H1 (cell line): ENCODE measurements at regions of chr1 and their contacts with region 1.

Region 1: GRCh38 chr1:206912445-206913095 is 9.2 kb downstream of the FCMR start:
- DNase-seq: peak in 1 of 2 experiments; percentile 67
- H3K4me3 ChIP-seq: no peak overlapping the region
- H3K27ac ChIP-seq: no peak overlapping the region
- H3K4me1 ChIP-seq: peaks cover 0 to 7% (median under 1%) of the 10 kb centered on the region in 4 experiments; a peak in 2 of 7 replicates
- H3K27me3 ChIP-seq: peaks cover 8 to 30% (median 27%) of the 10 kb centered on the region in 4 experiments
- CTCF ChIP-seq: peak; percentile 69 to 90 (median 87)
- EP300 ChIP-seq: no peak
- POLR2A ChIP-seq: no peak
- RAD21 ChIP-seq: peak; percentile 80 to 87

Region 2: DNA sequence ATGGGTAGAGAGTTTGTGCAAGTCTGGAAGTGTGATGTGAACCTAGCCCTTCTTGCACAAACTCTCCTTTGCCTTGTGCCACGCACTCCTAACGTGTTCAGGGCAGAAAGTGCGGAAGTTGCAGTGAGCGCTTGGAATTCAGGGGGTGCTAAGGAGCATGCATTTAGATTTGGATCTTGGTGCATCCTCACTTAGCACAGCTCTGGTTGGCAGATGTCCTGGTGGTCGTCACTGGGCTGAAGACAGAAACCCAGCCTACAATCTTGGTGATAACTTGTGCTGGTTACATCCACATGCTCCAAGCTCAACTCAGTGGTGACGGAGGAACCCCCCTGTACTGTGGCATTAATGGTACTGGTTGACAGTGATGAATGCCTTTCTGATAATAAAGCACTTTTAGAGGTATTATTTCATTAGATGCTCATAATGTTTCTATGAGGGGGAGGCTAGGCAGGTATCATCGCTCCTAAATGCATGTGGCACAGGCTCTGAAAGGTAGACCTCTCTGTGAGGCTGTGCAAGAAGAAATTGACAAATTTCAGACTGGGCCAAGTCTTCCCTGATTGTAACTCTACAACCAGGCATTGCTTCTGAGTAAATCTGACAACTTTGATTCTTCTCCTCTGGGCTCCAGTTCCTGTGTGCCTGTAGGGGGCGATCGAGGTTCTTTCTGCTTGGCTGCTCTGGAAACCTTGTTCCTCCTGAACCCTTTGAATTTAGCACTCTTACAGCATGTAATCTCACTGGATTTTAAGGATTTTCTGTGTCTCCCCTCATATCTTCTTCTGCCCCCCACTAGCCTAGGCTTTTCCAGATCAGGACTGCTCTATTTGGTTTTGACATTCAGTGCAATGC is 187.2 kb before region 1 on chr1:
- CTCF ChIA-PET with region 1: interaction called, 13 read pairs
- POLR2A ChIA-PET with region 1: no interaction called
- DNase-seq: peak in 1 of 2 experiments; percentile 77
- H3K4me3 ChIP-seq: no peak overlapping the region
- H3K27ac ChIP-seq: no peak overlapping the region
- H3K4me1 ChIP-seq: peaks cover 6 to 13% (median 8%) of the 10 kb centered on the region in 4 experiments
- H3K27me3 ChIP-seq: no peaks in the 10 kb centered on the region
- CTCF ChIP-seq: peak; percentile 64 to 85 (median 77)
- EP300 ChIP-seq: no peak
- POLR2A ChIP-seq: no peak
- RAD21 ChIP-seq: peak; percentile 22 to 46; a peak in 3 of 4 replicates

Region 3: DNA sequence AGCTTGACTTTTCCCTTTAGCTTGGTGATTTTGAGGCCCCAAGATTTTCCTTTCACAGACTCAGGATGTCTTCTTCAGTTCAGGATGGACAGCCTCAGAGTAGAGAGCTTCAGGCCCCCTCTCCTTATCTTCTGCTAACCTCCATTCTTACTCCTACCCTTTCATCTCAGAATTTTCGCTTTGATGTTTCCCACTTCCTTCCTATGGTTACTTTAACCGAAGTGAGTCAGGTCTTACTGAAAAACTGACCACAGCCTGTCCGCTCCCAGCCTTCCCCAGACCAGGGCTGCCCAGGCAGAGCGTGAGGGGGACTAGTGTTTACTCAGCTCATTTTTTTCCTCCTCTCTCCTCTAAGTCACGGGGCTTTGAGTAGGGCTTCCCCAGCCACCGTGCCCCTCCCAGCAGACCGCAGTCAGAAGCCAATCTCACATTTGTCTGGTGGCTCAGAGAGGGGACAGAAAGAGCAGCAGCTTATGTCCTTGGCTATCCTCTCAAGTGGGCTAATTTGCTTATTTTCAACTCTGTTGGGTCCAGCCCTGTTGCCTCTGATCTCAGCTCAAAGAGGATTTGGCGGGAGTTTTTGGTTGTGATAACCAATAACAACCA is 146.2 kb before region 1 on chr1:
- CTCF ChIA-PET with region 1: interaction called, 14 read pairs
- POLR2A ChIA-PET with region 1: no interaction called
- DNase-seq: no peak
- H3K4me3 ChIP-seq: no peak overlapping the region
- H3K27ac ChIP-seq: no peak overlapping the region
- H3K4me1 ChIP-seq: no peaks in the 10 kb centered on the region; a peak in 1 of 7 replicates
- H3K27me3 ChIP-seq: peaks cover 0 to 2% (median 0%) of the 10 kb centered on the region in 4 experiments; a peak in 1 of 7 replicates
- CTCF ChIP-seq: no peak
- EP300 ChIP-seq: no peak
- POLR2A ChIP-seq: no peak
- RAD21 ChIP-seq: no peak

Region 4: GRCh38 chr1:206839857-206840256 is 72.7 kb before region 1 on chr1:
- CTCF ChIA-PET with region 1: interaction called, 29 read pairs
- POLR2A ChIA-PET with region 1: no interaction called
- DNase-seq: no peak
- H3K4me3 ChIP-seq: no peak overlapping the region
- H3K27ac ChIP-seq: no peak overlapping the region
- H3K4me1 ChIP-seq: no peaks in the 10 kb centered on the region
- H3K27me3 ChIP-seq: no peaks in the 10 kb centered on the region
- CTCF ChIP-seq: no peak
- EP300 ChIP-seq: no peak
- POLR2A ChIP-seq: no peak
- RAD21 ChIP-seq: no peak

Region 5: DNA sequence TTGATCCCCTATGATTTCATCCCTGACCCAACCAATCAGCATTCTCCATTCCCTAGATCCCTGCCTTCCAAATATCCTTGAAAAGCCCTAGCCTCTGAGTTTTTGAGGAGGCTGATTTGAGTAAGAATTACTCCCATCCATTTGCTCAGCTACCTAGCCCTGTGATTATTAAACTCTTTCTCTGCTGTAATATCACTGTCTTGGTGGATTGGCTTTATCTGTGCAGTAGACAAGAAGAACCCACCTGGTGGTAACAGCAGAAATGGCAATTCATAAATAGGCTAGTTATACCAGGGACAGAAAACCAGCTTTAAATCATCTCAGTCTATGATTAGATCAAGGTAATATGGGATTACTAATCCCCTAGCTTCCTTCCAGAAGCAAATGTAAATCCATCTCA is 34.1 kb before region 1 on chr1:
- CTCF ChIA-PET with region 1: interaction called, 13 read pairs
- POLR2A ChIA-PET with region 1: no interaction called
- DNase-seq: no peak
- H3K4me3 ChIP-seq: no peak overlapping the region
- H3K27ac ChIP-seq: no peak overlapping the region
- H3K4me1 ChIP-seq: no peaks in the 10 kb centered on the region
- H3K27me3 ChIP-seq: no peaks in the 10 kb centered on the region
- CTCF ChIP-seq: peak in 1 of 3 experiments; percentile 30; a peak in 1 of 4 replicates
- EP300 ChIP-seq: no peak
- POLR2A ChIP-seq: no peak
- RAD21 ChIP-seq: no peak

Region 6: GRCh38 chr1:206935491-206936067 is 23.0 kb after region 1 on chr1:
- CTCF ChIA-PET with region 1: interaction called, 180 read pairs
- POLR2A ChIA-PET with region 1: no interaction called
- DNase-seq: peak; percentile 58 to 83
- H3K4me3 ChIP-seq: no peak overlapping the region
- H3K27ac ChIP-seq: no peak overlapping the region
- H3K4me1 ChIP-seq: no peaks in the 10 kb centered on the region
- H3K27me3 ChIP-seq: no peaks in the 10 kb centered on the region
- CTCF ChIP-seq: peak; percentile 88 to 99 (median 88)
- EP300 ChIP-seq: no peak
- POLR2A ChIP-seq: no peak
- RAD21 ChIP-seq: peak; percentile 50 to 65